ENCODE measurements at regions of chr7 and their contacts with region 1.

Region 1: DNA sequence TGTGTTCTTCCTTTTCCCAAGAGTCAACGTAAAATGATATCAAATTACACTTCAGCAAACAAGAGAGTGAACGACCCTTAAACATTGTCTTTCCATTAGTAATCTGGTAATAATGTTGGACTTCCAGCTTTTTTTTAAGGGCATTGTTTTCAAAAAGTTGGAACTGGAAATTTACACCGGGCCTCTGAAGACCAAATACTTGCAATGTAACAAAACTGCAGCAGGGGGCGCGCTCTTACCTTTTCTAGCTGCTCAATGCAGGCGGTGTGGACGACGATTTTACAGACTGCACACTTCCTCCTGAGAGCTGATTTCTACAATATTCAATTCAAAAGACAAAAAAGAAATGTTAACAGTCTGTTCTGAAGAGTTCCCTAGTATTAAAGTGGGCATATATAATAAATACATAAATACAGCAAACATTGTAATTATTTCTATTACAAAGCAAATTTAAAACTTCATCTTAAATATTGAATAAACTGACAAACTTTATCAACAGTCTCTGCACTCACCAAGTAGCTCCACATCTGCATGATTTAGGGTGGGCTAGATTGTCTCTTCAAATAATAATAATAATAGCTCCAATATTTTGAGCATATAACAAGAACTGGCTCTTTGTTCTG is 190.4 kb downstream of the DGKI start:
- DNase-seq: no peak
- H3K4me3 ChIP-seq: no peak overlapping the region
- H3K27me3 ChIP-seq: no peaks in the 10 kb centered on the region; the same call in 1 of the 2 replicates
- CTCF ChIP-seq: peak; percentile 80

Region 2: DNA sequence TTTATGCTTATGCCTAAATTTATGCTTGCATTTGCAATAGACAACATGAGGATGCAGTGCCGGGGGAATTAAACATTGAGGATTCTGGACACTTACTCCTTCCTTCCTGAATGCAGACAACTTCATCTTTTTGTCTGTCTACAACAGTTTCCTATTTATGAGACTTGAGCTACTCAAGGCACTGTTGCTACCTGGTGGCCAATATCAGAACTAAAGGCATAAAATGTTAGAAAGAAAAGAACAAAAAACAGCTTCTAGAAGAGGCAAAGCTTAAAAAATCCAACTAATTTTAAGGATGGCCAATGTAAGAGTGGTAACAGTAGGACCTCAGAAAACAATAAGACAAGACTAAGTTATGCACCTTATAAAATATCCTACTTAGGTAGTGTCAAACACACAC is 168.3 kb before region 1 on chr7:
- CTCF ChIA-PET with region 1: no interaction called
- POLR2A ChIA-PET with region 1: no interaction called
- DNase-seq: no peak
- H3K4me3 ChIP-seq: no peak overlapping the region
- H3K27me3 ChIP-seq: no peaks in the 10 kb centered on the region
- CTCF ChIP-seq: no peak

Region 3: GRCh38 chr7:137670199-137671071 is 14.1 kb after region 1 on chr7:
- CTCF ChIA-PET with region 1: interaction called, 29 read pairs
- POLR2A ChIA-PET with region 1: no interaction called
- DNase-seq: peak; percentile 25
- H3K4me3 ChIP-seq: no peak overlapping the region
- H3K27me3 ChIP-seq: no peaks in the 10 kb centered on the region
- CTCF ChIP-seq: no peak

Region 4: DNA sequence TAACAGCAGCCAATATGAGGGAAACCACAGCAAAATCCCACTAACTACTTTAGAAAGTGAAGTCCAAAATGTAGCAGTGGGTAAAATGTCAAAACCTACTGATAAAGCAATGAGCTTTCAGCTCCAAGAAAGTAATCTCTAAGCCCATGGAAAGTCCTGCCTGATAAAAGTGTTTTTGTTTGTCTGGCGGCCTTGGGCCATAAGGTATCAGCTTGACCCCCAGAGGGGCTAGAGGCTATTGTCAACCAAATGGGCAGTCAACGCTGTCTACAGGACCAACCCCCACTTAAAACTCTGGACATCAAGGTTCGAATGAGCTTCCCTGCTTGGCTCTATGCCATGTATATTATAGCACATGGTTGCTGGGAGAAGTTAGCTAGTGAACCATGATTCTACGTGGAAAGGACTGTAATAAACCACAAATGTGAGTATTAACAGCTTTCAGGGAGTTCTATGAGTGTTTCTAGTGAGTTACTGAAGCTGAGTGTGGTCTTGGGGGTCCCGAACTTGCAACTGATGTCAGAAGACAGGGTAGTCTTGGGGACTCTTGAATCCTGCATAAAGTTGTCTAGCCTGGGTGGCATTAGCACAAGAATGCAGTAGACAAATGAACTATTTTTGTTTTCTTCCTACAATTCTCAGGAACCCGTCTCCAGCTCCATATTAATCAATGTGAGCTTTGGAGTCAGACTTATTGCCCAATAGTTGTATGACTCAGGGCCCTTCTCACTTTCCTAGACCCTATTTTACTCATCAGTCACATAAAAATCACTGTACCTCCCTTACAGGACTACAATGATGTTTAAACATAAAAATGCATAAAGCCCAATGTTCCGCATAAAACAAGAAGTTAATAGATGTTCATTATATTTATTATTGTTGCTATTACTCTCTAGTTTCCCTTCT is 25.6 kb after region 1 on chr7:
- CTCF ChIA-PET with region 1: interaction called, 10 read pairs
- POLR2A ChIA-PET with region 1: no interaction called
- DNase-seq: peak; percentile 88
- H3K4me3 ChIP-seq: no peak overlapping the region
- H3K27me3 ChIP-seq: no peaks in the 10 kb centered on the region
- CTCF ChIP-seq: no peak

Region 5: GRCh38 chr7:137882261-137882668 is 225.9 kb after region 1 on chr7:
- CTCF ChIA-PET with region 1: interaction called, 12 read pairs
- POLR2A ChIA-PET with region 1: no interaction called
- DNase-seq: peak; percentile 96
- H3K4me3 ChIP-seq: no peak overlapping the region
- H3K27me3 ChIP-seq: no peaks in the 10 kb centered on the region
- CTCF ChIP-seq: no peak

Region 6: GRCh38 chr7:137890449-137890921 is 234.1 kb after region 1 on chr7:
- CTCF ChIA-PET with region 1: interaction called, 39 read pairs
- POLR2A ChIA-PET with region 1: no interaction called
- DNase-seq: no peak
- H3K4me3 ChIP-seq: no peak overlapping the region
- H3K27me3 ChIP-seq: no peaks in the 10 kb centered on the region
- CTCF ChIP-seq: no peak

Region 7: GRCh38 chr7:137898839-137899721 is 242.7 kb after region 1 on chr7:
- CTCF ChIA-PET with region 1: interaction called, 94 read pairs
- POLR2A ChIA-PET with region 1: no interaction called
- DNase-seq: no peak
- H3K4me3 ChIP-seq: no peak overlapping the region
- H3K27me3 ChIP-seq: no peaks in the 10 kb centered on the region
- CTCF ChIP-seq: peak; percentile 99

Region 8: GRCh38 chr7:138008547-138009349 is 352.4 kb after region 1 on chr7:
- CTCF ChIA-PET with region 1: interaction called, 19 read pairs
- POLR2A ChIA-PET with region 1: no interaction called
- DNase-seq: no peak
- H3K4me3 ChIP-seq: no peak overlapping the region
- H3K27me3 ChIP-seq: no peaks in the 10 kb centered on the region; the same call in 1 of the 2 replicates
- CTCF ChIP-seq: peak; percentile 81